ENCODE measurements at regions of chr1 and their contacts with region 1.

Region 1: DNA sequence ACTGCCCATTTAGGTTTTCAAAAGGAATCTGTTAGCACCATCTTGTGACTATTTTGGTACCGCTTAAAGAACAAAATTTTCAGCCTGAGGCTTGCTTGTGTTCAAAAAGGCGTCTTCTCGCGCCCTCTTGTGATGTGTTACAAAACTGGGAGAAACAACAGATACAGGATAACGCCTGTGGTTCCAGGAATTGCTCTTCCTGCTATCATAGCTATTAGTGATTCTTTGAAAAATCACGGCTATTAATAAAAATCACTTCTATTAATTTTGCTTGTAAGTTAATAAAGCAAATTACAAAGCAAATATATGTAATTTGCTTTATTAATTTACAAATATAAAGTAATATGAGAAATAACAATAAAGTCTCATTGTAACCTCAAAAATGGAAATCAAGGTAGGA is 82.2 kb upstream of the ABCD3 start:
- DNase-seq: peak; percentile 72
- ATAC-seq: peak; percentile 89 to 92

Region 2: DNA sequence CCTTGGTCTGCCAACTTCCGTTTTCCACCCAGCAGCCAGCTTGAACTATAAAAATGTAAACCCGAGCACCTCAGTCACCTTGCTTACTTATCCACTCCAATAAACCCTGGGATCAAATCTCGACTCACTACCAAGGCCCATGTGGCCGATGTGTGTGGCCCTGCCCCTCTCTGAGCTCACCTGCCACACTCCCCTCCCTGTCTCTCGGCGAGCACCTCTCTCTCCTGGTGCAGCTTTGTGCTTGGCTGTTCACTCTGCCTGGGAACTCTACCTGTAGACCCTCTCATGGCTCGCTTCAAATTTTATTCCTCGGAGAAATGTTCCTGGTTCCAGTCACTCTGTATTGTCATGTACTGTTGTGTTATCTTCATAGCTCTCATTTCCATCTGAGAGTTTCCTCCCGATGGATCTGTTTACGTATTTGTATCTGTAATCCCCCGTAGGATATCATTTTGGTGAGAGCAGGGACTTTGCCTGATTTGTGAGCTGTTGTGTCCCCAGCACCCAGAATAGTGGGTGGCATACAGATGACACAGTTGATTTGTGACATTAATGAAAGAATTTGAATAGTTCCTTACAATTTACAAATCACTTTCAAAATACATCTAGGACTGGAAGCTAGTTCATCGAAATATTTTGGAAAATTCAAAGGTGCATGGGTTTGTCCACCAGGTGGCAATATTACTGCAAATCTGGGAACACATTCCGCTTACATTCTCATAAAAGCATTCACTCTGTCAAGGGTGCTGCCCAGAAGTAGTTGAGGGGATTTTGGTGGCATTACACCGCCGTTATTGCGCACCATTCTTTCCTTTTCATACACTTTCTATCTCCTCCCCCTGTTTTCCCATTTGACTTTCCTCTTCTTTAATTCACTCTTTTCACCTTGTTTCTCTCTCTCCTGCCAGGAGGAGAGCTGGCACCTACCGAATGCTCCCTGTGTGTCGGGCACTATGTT is 310.3 kb before region 1 on chr1:
- intact Hi-C with region 1: loop called (anchors 2 to 5 kb)
- DNase-seq: no peak
- ATAC-seq: peak in 1 of 2 donors; percentile 51

Region 3: GRCh38 chr1:94045465-94046056 is 290.4 kb before region 1 on chr1:
- intact Hi-C with region 1: loop called in 1 of 2 experiments (anchors 5 kb)
- DNase-seq: peak; percentile 92
- ATAC-seq: peak; percentile 89 to 94

Region 4: GRCh38 chr1:94061513-94062443 is 274.2 kb before region 1 on chr1:
- intact Hi-C with region 1: loop called in 1 of 2 experiments (anchors 1 kb)
- DNase-seq: peak; percentile 81
- ATAC-seq: peak; percentile 87 to 89

Region 5: GRCh38 chr1:94095112-94095637 is 240.8 kb before region 1 on chr1:
- intact Hi-C with region 1: no loop called
- DNase-seq: peak; percentile 86
- ATAC-seq: peak; percentile 80 to 84

Region 6: DNA sequence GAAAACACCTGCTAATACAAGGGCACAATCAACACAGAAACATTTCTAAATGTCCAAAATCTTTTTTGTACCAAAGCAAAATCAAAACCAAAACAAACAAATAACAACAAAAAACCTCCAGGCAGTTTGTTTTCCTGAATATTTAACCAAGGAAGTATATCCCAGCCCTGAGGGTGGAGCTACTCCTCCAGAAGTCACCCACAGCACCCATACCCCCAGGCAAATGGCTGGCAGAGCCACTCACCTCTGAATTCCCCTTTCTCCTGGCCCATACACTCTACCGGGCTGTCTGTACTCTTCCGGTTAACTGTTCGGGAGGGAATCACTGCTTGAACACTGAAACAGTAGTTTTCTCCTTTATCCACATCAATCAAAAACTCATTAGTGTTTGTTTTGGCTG is 196.1 kb after region 1 on chr1:
- intact Hi-C with region 1: no loop called
- DNase-seq: no peak
- ATAC-seq: peak in 1 of 2 donors; percentile 25